Right cardiac atrium (tissue), 5 donors: ENCODE measurements at regions of chr14 and their contacts with region 1.

Region 1: DNA sequence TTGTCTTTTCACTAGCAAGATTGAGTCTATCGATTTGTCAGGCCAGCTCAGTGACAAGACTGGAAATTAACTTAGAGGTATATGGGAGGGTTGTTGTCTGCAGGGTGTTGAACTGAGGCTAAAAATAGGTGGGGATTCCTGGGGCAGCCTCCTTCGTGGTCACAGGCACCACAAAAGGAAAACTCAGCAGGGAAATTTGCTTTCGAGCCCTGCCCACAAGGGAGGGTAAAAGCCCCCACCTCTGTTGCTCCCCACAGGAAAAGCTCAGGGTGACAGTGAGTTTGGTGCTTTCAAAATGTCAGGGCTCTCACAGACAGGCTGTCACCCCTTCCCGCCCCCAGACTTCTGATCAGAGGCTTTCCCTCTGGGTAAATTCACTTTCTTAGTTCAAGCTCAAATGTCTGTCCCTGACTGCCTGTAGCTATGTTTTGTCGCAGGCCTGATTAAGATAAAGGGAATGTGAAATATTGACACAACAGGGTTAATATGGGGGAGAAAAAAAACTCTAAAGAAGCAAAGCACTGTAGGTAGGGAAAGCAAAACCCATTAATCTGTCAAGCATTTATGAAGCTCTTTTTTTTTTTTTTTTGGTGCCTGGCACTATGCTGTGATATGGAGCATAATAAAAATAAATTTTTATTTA is 11.7 kb upstream of the NFKBIA start:
- DNase-seq: no peak
- ATAC-seq: no peak
- H3K4me3 ChIP-seq: no peak overlapping the region
- H3K27ac ChIP-seq: peak overlapping the region; percentile 10
- H3K4me1 ChIP-seq: peaks cover 4% of the 10 kb centered on the region
- H3K27me3 ChIP-seq: no peaks in the 10 kb centered on the region

Region 2: DNA sequence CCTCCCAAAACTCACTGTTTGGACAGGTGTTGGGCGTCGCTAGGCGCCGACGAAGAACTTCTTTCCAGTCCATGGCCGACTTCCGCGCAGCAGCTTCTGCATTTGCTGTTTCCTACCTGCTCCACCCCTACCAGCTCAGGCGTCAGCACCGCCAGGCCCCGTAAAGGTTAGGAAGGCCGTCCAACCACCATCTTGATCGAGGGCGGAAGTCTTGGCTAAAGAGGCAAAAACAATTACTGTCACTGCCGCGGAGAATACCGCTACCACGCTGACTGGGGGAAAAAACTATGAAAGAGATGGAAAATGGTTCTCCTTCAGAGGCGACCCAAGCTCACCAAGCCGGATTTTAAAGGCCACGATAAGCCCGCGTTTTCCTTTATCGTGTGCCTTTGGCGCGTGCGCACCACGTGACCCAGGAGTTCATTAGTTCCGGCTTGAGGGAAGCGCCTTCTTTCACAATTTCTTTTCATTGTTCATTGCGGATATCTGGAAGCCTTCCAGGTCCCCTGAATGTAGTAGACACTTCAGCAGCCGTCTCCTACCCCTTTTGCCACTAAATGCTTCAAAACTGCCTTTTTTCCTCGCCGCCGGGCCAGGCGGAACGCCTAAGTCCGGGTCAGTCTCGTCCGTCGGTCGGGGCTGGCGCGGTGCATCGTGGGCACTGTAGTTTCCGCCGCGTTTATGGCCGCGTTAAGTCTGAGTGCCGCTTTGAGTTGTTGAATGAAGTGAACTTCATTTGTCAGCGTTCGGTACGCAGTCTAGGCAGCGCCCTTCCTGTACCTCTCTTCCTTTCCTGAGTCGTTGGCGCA is 294.1 kb before region 1 on chr14 and contains the starts of genes PPP2R3C and PRORP:
- intact Hi-C with region 1: loop called in 1 of 4 experiments (anchors 10 kb)
- DNase-seq: peak; percentile 90 to 95 (median 94)
- ATAC-seq: peak; percentile 95 to 97
- H3K4me3 ChIP-seq: peak within 1 kb of the TSS; percentile 92
- H3K27ac ChIP-seq: peak within 1 kb of the TSS; percentile 99
- H3K4me1 ChIP-seq: no peaks in the 10 kb centered on the region
- H3K27me3 ChIP-seq: no peaks in the 10 kb centered on the region
- total RNA-seq, gene PPP2R3C: 22.6 to 29.5 (median 28.3) TPM
- total RNA-seq, gene PRORP: 13.8 to 19.6 (median 17.9) TPM

Region 3: GRCh38 chr14:35140718-35141581 is 275.3 kb before region 1 on chr14:
- intact Hi-C with region 1: loop called (anchors 2 to 10 kb)
- DNase-seq: no peak
- ATAC-seq: no peak
- H3K4me3 ChIP-seq: no peak overlapping the region
- H3K27ac ChIP-seq: no peak overlapping the region
- H3K4me1 ChIP-seq: no peaks in the 10 kb centered on the region
- H3K27me3 ChIP-seq: no peaks in the 10 kb centered on the region

Region 4: DNA sequence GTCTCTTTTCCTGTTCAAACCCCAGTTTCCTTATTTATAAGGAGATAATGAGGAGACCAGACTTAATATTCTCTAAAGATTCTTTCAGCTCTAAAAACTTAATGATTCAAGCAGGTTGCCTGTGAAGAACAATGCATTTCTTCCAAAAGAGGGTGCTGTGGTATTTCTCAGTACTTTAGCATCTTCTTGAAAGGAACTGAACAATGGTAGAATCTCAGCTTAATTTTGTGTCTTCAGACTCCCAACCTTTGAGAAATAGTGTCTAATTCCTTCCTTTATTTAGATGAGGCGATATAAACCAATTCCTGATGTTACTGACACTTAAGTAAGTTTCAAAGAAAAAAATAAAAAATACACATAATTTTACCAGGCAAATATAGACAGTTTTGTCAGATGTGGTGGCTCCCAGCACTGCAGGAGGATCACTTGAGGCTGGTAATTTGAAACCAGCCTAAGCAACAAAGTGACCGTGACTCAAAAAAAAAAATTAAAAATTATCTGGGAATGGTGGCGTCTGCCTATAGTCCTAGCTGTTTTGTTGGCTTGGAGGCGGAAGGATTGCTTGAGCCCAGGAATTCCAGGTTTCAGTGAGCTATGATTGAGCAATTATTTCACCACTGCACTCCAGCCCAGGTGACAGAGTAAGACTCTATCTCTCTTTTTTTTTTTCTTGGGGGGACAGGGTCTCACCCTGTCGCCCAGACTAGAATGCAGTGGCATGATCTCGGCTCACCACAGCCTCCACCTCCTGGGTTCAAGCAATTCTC is 200.9 kb before region 1 on chr14:
- intact Hi-C with region 1: loop called in 3 of 4 experiments (anchors 5 to 10 kb)
- DNase-seq: no peak
- ATAC-seq: peak in 1 of 2 donors; percentile 51
- H3K4me3 ChIP-seq: no peak overlapping the region
- H3K27ac ChIP-seq: no peak overlapping the region
- H3K4me1 ChIP-seq: no peaks in the 10 kb centered on the region
- H3K27me3 ChIP-seq: no peaks in the 10 kb centered on the region

Region 5: DNA sequence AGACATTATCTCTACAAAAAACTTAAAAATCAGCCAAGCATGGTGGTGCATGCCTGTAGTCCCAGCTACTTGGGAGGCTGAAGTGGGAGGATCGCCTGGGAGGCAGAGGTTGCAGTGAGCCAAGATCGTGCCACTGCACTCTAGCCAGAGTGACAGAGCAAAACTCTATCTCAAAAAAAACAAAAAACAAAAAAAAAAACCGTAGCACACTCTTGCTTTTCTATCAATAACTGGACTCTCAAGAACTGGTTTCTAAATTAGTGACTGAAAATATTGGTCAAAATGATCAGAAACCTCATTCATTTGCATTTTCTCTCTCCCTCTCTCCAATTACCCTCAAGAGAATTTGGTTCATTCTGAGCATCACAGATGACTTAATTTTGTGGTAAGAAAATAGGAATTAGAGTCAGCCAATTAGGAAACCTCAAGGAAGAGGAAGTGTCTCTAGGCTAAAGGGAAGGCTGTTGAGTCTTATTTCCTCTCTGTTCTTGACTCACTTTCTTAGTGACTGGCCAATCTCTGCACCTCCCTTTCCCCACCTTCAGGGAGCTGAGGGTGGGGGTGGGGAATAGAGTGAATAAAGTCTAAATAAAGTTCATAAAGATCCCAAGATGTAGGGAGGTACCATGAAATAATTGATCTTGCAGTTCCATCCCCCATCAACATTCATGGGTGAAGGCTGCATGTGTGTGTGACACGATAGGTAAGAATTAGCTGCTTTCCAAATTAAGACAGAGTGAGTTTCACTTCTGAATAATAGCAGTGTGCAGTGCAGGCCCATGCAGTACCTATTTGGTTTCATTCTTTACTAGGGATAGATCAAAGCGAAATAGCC is 130.8 kb before region 1 on chr14:
- intact Hi-C with region 1: no loop called
- DNase-seq: no peak
- ATAC-seq: peak; percentile 29 to 70
- H3K4me3 ChIP-seq: no peak overlapping the region
- H3K27ac ChIP-seq: no peak overlapping the region
- H3K4me1 ChIP-seq: peaks cover 2% of the 10 kb centered on the region
- H3K27me3 ChIP-seq: no peaks in the 10 kb centered on the region

Region 6: DNA sequence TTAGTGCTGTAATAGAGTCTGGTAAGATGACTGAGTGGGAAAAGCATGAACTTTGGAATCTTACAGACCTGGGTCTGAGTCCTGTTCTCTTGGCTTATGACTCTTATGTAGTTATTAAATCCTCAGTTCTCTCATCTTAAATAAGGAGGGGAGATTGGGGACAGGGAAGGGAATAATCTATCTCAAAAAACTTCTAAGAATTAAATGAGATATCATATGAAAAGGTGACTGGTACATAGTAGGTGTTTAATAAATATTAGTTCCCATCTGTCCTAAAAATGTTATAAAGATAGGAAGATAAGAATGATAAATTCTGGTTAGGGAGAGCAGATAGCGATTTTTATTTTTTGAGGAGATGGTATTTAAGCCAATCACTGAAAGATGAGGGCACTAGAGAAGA is 236.8 kb after region 1 on chr14:
- intact Hi-C with region 1: no loop called
- DNase-seq: no peak
- ATAC-seq: no peak
- H3K4me3 ChIP-seq: no peak overlapping the region
- H3K27ac ChIP-seq: no peak overlapping the region
- H3K4me1 ChIP-seq: no peaks in the 10 kb centered on the region
- H3K27me3 ChIP-seq: no peaks in the 10 kb centered on the region

Region 7: DNA sequence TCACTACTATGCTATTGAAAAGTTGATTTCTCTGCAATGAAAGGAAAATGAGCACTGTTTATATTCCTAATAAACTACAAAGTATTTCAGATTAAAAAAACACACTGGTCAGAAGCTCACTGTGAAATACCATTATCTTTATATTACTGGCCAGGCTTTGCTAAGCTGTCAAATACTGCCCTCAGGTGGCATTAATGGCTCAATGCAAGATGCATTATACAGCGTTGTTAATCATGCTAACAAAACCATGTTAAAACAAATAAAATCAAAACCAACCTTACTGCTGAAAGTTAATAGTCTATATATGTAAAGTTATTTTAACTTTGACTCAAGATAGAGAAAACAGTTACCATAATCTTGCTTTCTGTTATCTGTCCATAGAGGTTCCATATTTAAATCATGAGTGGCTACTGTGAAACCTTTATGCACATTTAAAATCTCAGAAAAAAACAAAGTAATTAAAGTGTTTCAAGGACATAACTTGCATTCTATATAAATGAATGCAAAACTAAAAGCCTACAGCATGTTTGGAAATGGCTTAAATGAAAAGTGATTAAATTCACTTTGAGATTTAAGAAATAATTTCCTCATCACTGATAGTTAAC is 271.2 kb after region 1 on chr14:
- intact Hi-C with region 1: loop called in 1 of 4 experiments (anchors 10 kb)
- DNase-seq: no peak
- ATAC-seq: no peak
- H3K4me3 ChIP-seq: no peak overlapping the region
- H3K27ac ChIP-seq: no peak overlapping the region
- H3K4me1 ChIP-seq: no peaks in the 10 kb centered on the region
- H3K27me3 ChIP-seq: no peaks in the 10 kb centered on the region

Region 8: GRCh38 chr14:35998303-35998702 is 582.1 kb after region 1 on chr14:
- intact Hi-C with region 1: no loop called
- DNase-seq: no peak
- ATAC-seq: no peak
- H3K4me3 ChIP-seq: no peak overlapping the region
- H3K27ac ChIP-seq: no peak overlapping the region
- H3K4me1 ChIP-seq: no peaks in the 10 kb centered on the region
- H3K27me3 ChIP-seq: no peaks in the 10 kb centered on the region